SK-MEL-5 (cell line): ENCODE measurements at regions of chr3 and their contacts with region 1.

Region 1: DNA sequence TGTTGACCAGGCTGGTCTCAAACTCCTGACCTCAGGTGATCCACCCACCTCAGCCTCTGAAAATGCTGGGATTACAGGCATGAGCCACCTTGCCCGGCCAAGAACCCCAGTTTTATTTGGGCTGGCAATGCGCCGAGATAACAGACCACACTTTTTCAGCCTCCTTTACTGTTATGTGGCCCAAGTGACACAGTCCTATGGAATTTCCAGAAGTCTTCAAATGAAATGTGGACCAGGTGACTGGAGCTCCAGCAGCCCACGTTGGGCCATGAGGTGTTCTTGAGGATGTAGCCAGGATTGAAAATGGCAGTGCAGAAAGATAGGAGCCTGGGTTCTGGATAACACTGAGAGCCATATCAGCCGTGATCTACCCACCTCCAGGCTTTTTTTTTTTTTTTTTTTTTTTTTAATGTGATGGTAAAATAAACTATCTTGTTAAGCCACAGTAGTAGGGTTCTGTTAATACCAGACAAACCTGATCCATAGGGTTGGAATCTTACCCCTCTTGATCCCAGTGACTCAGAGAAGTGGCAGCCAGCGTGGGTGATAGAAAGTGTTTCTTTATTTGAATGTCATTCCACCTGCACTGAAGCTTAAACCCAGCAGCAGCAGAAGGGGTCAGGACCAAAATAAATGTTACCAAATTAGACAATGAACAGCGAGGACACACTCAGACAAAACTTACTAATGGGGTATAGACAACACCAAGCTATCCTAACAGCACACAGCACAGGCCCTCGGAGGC is 55.6 kb downstream of the LHFPL4 start:
- DNase-seq: no peak

Region 2: GRCh38 chr3:8733332-8734094 is 764.5 kb before region 1 on chr3 and contains the start of gene CAV3:
- in situ Hi-C with region 1: no loop called
- DNase-seq: no peak
- total RNA-seq, gene CAV3: not detected in 2 replicates

Region 3: GRCh38 chr3:9649791-9650521 is 152.0 kb after region 1 on chr3:
- in situ Hi-C with region 1: loop called (anchors 25 kb)
- DNase-seq: no peak